WTC11 (cell line): ENCODE measurements at regions of chr5 and their contacts with region 1.

Region 1: DNA sequence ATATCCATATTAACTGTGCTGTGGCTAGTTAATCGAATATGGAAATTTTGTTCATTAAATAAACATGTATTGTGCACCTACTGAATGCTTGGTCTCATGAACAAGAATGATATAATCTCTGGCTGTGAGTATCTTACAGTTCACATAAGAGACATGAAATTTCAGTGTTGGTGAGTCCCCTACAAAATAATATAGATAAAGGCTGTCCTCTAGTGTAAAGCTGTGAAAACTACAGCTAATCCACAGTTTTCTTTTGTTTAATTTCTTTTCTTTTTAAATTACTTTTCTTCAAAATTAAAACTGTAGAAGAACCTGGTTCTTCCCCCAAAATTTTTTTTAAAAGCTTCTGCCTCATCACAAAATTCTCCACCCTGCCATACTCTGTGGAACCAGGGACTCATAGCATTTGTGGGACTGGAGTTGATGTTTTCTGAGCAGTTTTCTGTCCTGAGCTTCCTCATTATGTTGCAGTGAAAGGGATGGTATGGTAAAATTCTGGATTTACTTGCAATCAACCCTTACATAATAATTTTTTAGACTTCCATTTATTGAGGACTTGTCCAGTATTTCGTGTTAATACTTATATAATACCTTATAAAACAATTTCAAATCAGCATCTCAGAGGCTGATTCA is 135.0 kb downstream of the STK32A start:
- DNase-seq: no peak
- ATAC-seq: peak; percentile 71
- H3K4me3 Mint-ChIP-seq: no peak overlapping the region
- H3K27ac Mint-ChIP-seq: no peak overlapping the region
- H3K4me1 Mint-ChIP-seq: peaks cover 6% of the 10 kb centered on the region
- H3K27me3 Mint-ChIP-seq: no peaks in the 10 kb centered on the region
- CTCF ChIP-seq: peak; percentile 31; the same call in 1 of the 2 replicates

Region 2: GRCh38 chr5:146533260-146533857 is 836.5 kb before region 1 on chr5:
- CTCF ChIA-PET with region 1: interaction called, 17 read pairs
- POLR2A ChIA-PET with region 1: no interaction called
- DNase-seq: peak; percentile 84
- ATAC-seq: peak; percentile 90
- H3K4me3 Mint-ChIP-seq: 0 out of 2 replicates have a peak overlapping the region, but pooled peaks have one; percentile 33
- H3K27ac Mint-ChIP-seq: no peak overlapping the region; the same call in 1 of the 2 replicates
- H3K4me1 Mint-ChIP-seq: peaks cover 15% of the 10 kb centered on the region
- H3K27me3 Mint-ChIP-seq: no peaks in the 10 kb centered on the region; the same call in 1 of the 2 replicates
- CTCF ChIP-seq: peak; percentile 71

Region 3: GRCh38 chr5:147098233-147098790 is 271.5 kb before region 1 on chr5:
- CTCF ChIA-PET with region 1: interaction called, 14 read pairs
- POLR2A ChIA-PET with region 1: no interaction called
- DNase-seq: peak; percentile 49
- ATAC-seq: peak; percentile 70
- H3K4me3 Mint-ChIP-seq: no peak overlapping the region
- H3K27ac Mint-ChIP-seq: peak overlapping the region; percentile 68; the same call in 1 of the 2 replicates
- H3K4me1 Mint-ChIP-seq: peaks cover 20% of the 10 kb centered on the region
- H3K27me3 Mint-ChIP-seq: no peaks in the 10 kb centered on the region
- CTCF ChIP-seq: peak; percentile 79

Region 4: DNA sequence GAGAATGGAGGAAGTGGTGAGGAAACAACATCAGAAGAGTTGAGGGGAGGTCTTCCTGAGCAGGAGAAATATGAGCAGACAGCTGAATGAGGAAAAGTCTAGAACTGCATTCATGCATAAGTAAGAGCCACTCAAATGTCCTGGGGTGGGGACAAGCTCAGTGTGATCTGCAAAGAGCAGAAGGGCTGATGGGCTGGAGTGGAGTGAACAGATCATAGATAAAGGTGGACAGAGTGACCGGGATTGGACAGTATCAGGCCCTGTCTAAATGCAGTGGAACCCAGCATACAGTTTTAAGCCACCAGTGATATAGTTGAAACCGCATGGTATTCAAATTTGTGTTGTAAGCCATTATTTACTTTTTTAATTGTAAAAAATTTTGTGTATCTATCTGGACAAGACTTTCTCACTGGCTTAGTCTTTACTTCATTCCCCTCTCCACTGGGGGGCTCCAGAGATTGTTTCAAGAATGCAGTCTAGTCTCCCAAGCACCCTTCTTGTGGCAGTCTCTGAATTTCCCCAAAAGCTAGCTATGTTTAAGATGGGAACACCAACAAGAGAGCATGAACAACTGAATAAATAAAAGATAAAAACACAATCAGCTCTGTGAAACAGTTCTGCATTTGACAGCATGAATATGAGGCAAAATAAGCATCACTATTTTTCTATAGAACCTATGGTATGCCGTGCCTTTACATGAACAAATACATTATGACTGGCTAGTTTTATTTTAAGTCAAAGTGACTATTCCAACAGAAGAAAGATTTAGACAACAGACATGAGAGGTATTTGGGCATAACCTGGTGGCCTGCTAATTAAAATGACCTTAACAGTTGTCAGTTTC is 145.7 kb before region 1 on chr5:
- CTCF ChIA-PET with region 1: interaction called, 75 read pairs
- POLR2A ChIA-PET with region 1: no interaction called
- DNase-seq: peak; percentile 19
- ATAC-seq: peak; percentile 84
- H3K4me3 Mint-ChIP-seq: no peak overlapping the region
- H3K27ac Mint-ChIP-seq: no peak overlapping the region
- H3K4me1 Mint-ChIP-seq: peaks cover 13% of the 10 kb centered on the region
- H3K27me3 Mint-ChIP-seq: peaks cover under 1% of the 10 kb centered on the region; the same call in 1 of the 2 replicates
- CTCF ChIP-seq: 0 out of 2 replicates have a peak, but pooled peaks have one; percentile 18

Region 5: GRCh38 chr5:147234825-147235635 is 134.8 kb before region 1 on chr5 and contains the start of gene STK32A:
- CTCF ChIA-PET with region 1: interaction called, 24 read pairs
- POLR2A ChIA-PET with region 1: no interaction called
- DNase-seq: peak; percentile 88
- ATAC-seq: peak; percentile 100
- H3K4me3 Mint-ChIP-seq: peak within 1 kb of the TSS; percentile 83
- H3K27ac Mint-ChIP-seq: peak within 1 kb of the TSS; percentile 97
- H3K4me1 Mint-ChIP-seq: peaks cover 6% of the 10 kb centered on the region
- H3K27me3 Mint-ChIP-seq: peaks cover 48% of the 10 kb centered on the region
- CTCF ChIP-seq: no peak
- total RNA-seq, gene STK32A: 1.7 to 3.0 TPM (median 3.0 TPM) in 3 replicates

Region 6: DNA sequence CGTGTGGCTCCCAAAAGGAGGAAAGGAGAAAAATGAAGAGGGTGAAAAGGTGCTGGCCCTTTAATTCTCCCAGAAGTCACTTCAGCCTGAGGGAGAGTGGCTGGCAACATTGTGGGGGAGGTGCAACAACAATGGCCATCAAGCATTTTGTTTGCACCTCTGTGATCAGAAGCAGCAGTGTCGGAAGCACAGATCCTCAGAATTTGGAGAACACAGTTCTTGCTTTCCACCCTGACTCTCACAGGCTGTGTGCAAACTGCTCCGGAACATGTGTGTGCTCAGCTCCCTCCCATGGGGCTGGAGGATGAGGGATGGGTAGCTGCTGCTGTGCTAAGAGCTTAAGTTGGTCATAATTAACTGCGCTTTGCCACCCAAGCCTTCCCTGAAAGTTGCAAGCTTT is 12.9 kb after region 1 on chr5:
- CTCF ChIA-PET with region 1: interaction called, 11 read pairs
- POLR2A ChIA-PET with region 1: no interaction called
- DNase-seq: no peak
- ATAC-seq: peak; percentile 63
- H3K4me3 Mint-ChIP-seq: no peak overlapping the region
- H3K27ac Mint-ChIP-seq: no peak overlapping the region
- H3K4me1 Mint-ChIP-seq: peaks cover 20% of the 10 kb centered on the region
- H3K27me3 Mint-ChIP-seq: no peaks in the 10 kb centered on the region; the same call in none of the 2 replicates
- CTCF ChIP-seq: no peak

Region 7: DNA sequence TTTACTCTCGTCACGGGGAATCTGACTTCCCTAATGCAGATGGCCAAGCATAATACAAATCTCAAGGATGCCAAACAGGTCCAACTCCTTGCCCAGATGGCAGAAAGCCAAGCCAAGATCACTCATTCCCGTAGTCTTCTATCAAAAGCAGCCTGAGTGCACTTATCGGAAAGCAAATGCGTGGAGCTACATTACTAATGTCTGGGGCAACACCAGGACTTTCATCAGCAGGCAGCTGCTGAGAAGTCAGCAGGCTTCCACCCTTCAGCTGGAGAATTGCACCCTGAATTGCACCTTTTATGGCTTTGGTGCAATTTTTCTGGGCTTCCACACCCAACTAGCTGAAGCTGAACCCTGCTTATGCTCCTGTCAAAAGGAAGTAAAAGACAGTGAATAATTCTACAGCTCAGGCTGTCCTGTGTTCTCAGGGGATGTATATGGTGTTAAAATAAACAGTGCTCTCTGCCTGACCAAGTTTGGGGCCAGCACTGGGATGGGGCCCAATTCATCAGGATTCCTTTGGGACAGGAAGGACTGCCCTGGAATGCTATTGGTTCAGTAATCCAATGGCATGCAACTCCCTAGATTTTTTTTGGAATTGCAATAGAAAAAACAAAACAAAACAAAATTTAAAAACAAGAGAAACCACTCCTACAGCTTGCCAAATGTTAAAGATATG is 47.4 kb after region 1 on chr5:
- CTCF ChIA-PET with region 1: no interaction called
- POLR2A ChIA-PET with region 1: no interaction called
- DNase-seq: no peak
- ATAC-seq: no peak
- H3K4me3 Mint-ChIP-seq: no peak overlapping the region
- H3K27ac Mint-ChIP-seq: peak overlapping the region; percentile 62
- H3K4me1 Mint-ChIP-seq: peaks cover 17% of the 10 kb centered on the region
- H3K27me3 Mint-ChIP-seq: no peaks in the 10 kb centered on the region
- CTCF ChIP-seq: no peak